Mammary epithelial cell (primary cell): ENCODE measurements at regions of chr6 and their contacts with region 1.

Region 1: DNA sequence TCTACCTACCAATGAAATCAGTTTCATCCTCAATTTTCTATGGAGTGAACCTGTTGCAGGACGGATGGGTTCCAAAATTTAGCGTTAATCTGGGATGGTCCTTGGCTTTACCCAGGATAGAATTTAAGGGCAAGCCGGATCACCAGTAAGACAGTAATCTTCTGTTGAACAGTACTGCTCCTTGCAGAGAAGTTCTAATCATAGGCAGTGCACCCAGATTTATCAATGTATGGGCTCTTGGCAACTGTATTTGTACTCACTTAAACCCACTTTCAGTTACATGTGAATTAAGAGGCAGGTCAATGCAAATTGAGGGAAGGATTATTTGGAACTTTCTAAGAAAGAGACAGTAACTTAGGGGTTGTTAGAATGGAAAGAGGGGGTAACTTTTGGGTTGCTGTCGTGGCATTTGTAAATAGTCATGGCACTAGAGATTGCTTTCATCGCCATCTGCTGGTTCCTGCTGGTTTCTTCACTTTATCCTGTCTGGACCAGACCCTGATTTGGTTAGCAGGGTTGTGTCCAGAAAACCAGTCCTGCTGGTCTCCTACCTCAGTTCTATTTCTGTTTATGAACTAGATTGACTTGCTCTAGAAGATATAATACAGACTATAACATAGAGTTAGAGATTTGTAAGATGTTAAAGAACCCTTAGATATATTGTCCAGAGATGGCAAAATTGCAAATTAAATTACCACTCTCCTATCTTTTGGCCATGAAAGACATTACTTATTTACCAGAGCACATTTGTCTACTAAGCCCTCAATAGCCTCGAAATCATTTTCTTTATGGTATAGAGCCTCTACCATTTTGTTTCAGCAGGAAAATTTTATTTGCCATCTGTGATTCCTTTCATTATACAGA is 646.3 kb downstream of the UTRN start:
- DNase-seq: peak; percentile 39
- H3K4me3 ChIP-seq: no peak overlapping the region
- H3K27ac ChIP-seq: no peak overlapping the region
- H3K4me1 ChIP-seq: no peaks in the 10 kb centered on the region
- H3K27me3 ChIP-seq: no peaks in the 10 kb centered on the region
- CTCF ChIP-seq: peak; percentile 72 to 77

Region 2: DNA sequence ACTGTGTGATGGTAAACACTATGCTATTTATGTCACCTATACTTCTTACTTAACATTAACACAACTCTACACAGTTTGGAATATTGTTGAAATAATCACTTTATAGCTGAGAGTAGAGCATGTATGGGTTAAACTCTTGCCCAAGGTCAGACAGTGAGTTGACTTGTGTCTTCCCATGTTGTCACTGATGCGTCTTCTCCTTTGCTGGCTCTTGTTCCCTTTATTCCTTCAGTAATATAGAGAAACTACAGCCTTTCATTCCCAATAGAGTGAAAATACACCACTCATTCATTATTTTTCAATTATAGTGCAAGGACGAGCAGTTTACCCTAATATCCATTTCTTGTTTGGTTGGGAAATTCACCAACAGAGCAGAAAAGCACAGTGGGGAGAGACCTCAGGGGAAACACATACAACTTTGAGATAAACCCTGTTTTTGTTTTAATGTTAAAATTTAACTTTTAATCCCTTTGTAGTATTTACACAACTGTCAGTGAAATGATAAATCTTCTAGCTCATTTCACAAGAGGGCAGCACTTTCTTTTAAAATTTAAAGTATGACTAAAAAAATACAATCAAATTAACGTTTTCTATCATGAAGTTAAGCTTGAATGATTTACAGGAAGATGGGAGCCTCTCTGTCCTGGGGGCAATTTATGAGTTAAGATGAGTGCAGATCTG is 283.3 kb before region 1 on chr6:
- CTCF ChIA-PET with region 1: no interaction called
- dilution Hi-C with region 1: no loop called
- in situ Hi-C with region 1: no loop called
- intact Hi-C with region 1: loop called (anchors 2 kb)
- DNase-seq: no peak
- H3K4me3 ChIP-seq: no peak overlapping the region
- H3K27ac ChIP-seq: no peak overlapping the region
- H3K4me1 ChIP-seq: no peaks in the 10 kb centered on the region
- H3K27me3 ChIP-seq: no peaks in the 10 kb centered on the region
- CTCF ChIP-seq: no peak

Region 3: DNA sequence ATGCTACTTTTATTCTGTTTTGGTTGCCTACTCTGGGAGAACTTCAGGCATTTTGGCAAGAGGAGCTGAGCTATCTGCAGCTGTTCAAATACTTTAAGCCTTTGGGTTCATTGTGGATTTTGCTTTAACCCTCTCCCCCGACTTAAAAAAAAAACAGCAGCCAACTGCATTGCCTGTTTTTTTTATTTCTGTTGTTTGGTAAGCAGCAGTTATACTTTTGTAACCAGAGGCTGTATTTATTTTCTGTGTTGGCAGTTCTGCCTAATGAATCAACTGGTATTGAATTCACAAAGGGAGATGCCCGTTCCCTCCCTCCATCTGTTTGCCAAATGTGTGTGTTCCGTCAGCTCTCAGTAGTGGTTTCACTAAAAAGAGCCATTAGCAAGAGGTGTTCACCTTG is 162.3 kb before region 1 on chr6:
- CTCF ChIA-PET with region 1: no interaction called
- dilution Hi-C with region 1: no loop called
- in situ Hi-C with region 1: no loop called
- intact Hi-C with region 1: no loop called
- DNase-seq: no peak
- H3K4me3 ChIP-seq: no peak overlapping the region
- H3K27ac ChIP-seq: no peak overlapping the region
- H3K4me1 ChIP-seq: no peaks in the 10 kb centered on the region
- H3K27me3 ChIP-seq: no peaks in the 10 kb centered on the region
- CTCF ChIP-seq: no peak

Region 4: GRCh38 chr6:144809120-144809519 is 122.3 kb before region 1 on chr6:
- CTCF ChIA-PET with region 1: no interaction called
- dilution Hi-C with region 1: no loop called
- in situ Hi-C with region 1: no loop called
- intact Hi-C with region 1: loop called (anchors 1 kb)
- DNase-seq: peak; percentile 59
- H3K4me3 ChIP-seq: no peak overlapping the region
- H3K27ac ChIP-seq: no peak overlapping the region
- H3K4me1 ChIP-seq: peaks cover 8% of the 10 kb centered on the region
- H3K27me3 ChIP-seq: no peaks in the 10 kb centered on the region
- CTCF ChIP-seq: peak in 1 of 2 donors; percentile 40

Region 5: GRCh38 chr6:145137426-145137825 is 206.0 kb after region 1 on chr6:
- CTCF ChIA-PET with region 1: no interaction called
- dilution Hi-C with region 1: no loop called
- in situ Hi-C with region 1: no loop called
- intact Hi-C with region 1: loop called (anchors 1 kb)
- DNase-seq: no peak
- H3K4me3 ChIP-seq: no peak overlapping the region
- H3K27ac ChIP-seq: no peak overlapping the region
- H3K4me1 ChIP-seq: no peaks in the 10 kb centered on the region
- H3K27me3 ChIP-seq: peaks cover 2% of the 10 kb centered on the region
- CTCF ChIP-seq: peak; percentile 21 to 44

Region 6: DNA sequence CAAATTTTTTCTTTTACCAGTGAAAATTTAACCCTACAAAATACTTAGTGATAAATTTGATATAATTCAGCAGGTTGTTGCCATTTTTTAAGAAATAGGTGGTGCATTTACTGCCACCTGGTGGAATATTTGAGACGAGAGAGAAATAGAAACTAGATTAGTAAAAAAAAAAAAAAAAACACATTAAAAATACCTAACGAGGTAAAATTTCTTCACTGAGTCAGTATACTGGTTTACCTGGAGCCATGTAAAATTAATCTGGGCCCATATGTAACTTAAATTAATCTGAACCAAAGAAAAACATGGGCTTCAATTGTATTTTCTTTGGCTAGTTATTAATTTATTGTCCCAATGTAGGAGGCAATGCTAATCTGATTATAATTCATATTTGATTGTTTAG is 283.2 kb after region 1 on chr6:
- CTCF ChIA-PET with region 1: no interaction called
- dilution Hi-C with region 1: no loop called
- in situ Hi-C with region 1: no loop called
- intact Hi-C with region 1: loop called (anchors 5 kb)
- DNase-seq: peak; percentile 10
- H3K4me3 ChIP-seq: no peak overlapping the region
- H3K27ac ChIP-seq: no peak overlapping the region
- H3K4me1 ChIP-seq: no peaks in the 10 kb centered on the region
- H3K27me3 ChIP-seq: no peaks in the 10 kb centered on the region
- CTCF ChIP-seq: peak; percentile 36 to 49